PC-9 (cell line): ENCODE measurements at regions of chr3 and their contacts with region 1.

Region 1: GRCh38 chr3:4633078-4634004 is 140.2 kb downstream of the ITPR1 start:
- DNase-seq: peak; percentile 12 to 43
- H3K4me3 ChIP-seq: no peak overlapping the region
- H3K27ac ChIP-seq: no peak overlapping the region
- H3K4me1 ChIP-seq: no peaks in the 10 kb centered on the region
- H3K27me3 ChIP-seq: no peaks in the 10 kb centered on the region
- CTCF ChIP-seq: peak; percentile 77

Region 2: GRCh38 chr3:4290272-4290893 is 343.0 kb before region 1 on chr3:
- CTCF ChIA-PET with region 1: no interaction called
- POLR2A ChIA-PET with region 1: interaction called, 10 read pairs
- intact Hi-C with region 1: loop called (anchors 1 kb)
- DNase-seq: peak in 1 of 2 experiments; percentile 38
- H3K4me3 ChIP-seq: no peak overlapping the region
- H3K27ac ChIP-seq: no peak overlapping the region
- H3K4me1 ChIP-seq: no peaks in the 10 kb centered on the region
- H3K27me3 ChIP-seq: no peaks in the 10 kb centered on the region
- CTCF ChIP-seq: peak; percentile 78

Region 3: DNA sequence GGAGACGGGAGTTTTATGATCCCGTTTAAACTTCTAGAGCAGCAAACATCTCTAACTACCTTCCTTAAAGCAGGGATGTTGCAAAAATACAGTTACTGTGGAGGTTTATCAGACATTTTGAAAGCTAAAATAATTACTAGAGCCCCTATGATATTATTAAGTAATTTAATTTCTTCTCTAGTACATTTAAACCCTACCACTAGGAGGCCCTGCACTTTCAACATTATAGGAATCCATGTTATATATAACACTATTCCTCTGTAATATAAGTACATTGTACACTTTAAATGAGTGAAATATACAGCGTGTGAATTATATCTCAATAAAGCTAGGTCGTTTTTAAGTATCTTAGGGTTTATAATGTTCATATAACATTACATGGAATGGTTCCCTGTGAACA is 318.7 kb before region 1 on chr3:
- CTCF ChIA-PET with region 1: no interaction called
- POLR2A ChIA-PET with region 1: no interaction called
- intact Hi-C with region 1: loop called (anchors 1 kb)
- DNase-seq: no peak
- H3K4me3 ChIP-seq: no peak overlapping the region
- H3K27ac ChIP-seq: no peak overlapping the region
- H3K4me1 ChIP-seq: no peaks in the 10 kb centered on the region
- H3K27me3 ChIP-seq: no peaks in the 10 kb centered on the region
- CTCF ChIP-seq: peak; percentile 55

Region 4: GRCh38 chr3:4350789-4351163 is 282.6 kb before region 1 on chr3:
- CTCF ChIA-PET with region 1: interaction called, 12 read pairs
- POLR2A ChIA-PET with region 1: no interaction called
- intact Hi-C with region 1: loop called (anchors 1 kb)
- DNase-seq: peak; percentile 10 to 33
- H3K4me3 ChIP-seq: no peak overlapping the region
- H3K27ac ChIP-seq: no peak overlapping the region
- H3K4me1 ChIP-seq: no peaks in the 10 kb centered on the region
- H3K27me3 ChIP-seq: no peaks in the 10 kb centered on the region
- CTCF ChIP-seq: peak; percentile 80

Region 5: GRCh38 chr3:4571690-4572334 is 61.5 kb before region 1 on chr3:
- CTCF ChIA-PET with region 1: no interaction called
- POLR2A ChIA-PET with region 1: no interaction called
- intact Hi-C with region 1: no loop called
- DNase-seq: no peak
- H3K4me3 ChIP-seq: no peak overlapping the region
- H3K27ac ChIP-seq: no peak overlapping the region
- H3K4me1 ChIP-seq: peaks cover 5% of the 10 kb centered on the region
- H3K27me3 ChIP-seq: no peaks in the 10 kb centered on the region
- CTCF ChIP-seq: no peak